ENCODE measurements at regions of chr1 and their contacts with region 1.

Region 1: DNA sequence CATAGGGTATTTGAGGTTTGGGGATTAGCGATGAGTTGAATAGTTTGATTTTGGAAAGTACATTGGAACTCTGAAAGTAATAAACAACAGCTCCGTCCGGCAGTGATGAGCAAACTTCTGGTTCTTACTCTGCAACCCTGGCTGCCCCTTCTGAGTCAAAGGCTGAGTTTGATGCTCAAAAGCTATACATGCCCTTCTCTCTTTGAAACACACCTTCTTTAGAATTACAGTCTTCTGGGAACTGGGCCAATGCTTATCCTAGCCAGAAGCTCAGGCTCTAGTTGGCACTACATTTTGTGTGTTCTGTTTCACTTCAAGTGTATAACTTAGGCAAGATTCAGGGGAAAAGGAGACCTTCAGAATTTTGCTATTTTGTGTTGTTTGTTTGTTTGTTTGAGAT is 9.3 kb downstream of the AHCYL1 start:
- DNase-seq: peak; percentile 69
- H3K4me3 Mint-ChIP-seq: no peak overlapping the region
- H3K27ac Mint-ChIP-seq: no peak overlapping the region
- H3K4me1 Mint-ChIP-seq: peaks cover 43% of the 10 kb centered on the region
- H3K27me3 Mint-ChIP-seq: no peaks in the 10 kb centered on the region
- CTCF ChIP-seq: no peak

Region 2: DNA sequence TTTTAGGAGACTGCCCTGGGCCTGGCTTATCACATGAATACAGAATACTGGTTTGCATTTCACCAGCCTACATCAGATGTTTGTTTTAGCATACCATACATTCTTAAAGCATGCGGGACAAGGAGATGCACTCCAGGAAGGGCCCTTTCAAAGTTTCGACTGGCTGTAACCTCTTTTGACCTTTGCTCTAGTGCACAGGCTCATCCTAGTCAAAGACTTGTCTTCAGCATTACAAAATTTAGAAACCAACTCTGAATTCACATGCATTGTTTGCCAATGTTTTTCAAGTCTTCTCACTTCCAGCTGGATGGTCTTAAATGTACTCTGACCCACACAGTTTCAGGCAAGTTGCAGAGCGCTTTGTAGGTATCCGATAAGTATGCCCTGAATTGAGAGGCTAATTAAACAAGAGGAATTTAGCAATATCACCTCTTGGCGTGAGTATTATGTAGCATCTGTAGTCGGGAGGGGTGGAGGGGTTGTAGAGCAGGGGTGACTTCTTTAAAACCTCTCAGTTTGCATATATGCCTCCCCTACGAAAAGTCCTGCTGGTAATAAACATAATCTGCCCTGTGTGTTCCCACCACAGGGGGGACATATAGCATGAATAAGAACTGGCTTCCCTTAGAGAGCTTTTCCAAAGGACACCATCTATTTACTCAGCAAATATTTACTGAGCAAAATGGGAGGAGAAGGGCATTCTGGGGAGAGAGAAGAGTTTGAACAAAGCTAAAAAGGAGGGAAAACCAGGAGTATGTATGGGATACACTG is 33.7 kb before region 1 on chr1:
- CTCF ChIA-PET with region 1: no interaction called
- POLR2A ChIA-PET with region 1: no interaction called
- intact Hi-C with region 1: no loop called
- DNase-seq: peak; percentile 58
- H3K4me3 Mint-ChIP-seq: no peak overlapping the region
- H3K27ac Mint-ChIP-seq: peak overlapping the region; percentile 82
- H3K4me1 Mint-ChIP-seq: peaks cover 29% of the 10 kb centered on the region
- H3K27me3 Mint-ChIP-seq: no peaks in the 10 kb centered on the region
- CTCF ChIP-seq: no peak

Region 3: GRCh38 chr1:110003747-110004630 is 10.1 kb after region 1 on chr1:
- CTCF ChIA-PET with region 1: interaction called, 93 read pairs
- POLR2A ChIA-PET with region 1: interaction called, 16 read pairs
- intact Hi-C with region 1: no loop called
- DNase-seq: peak; percentile 99
- H3K4me3 Mint-ChIP-seq: peak overlapping the region; percentile 70
- H3K27ac Mint-ChIP-seq: peak overlapping the region; percentile 88
- H3K4me1 Mint-ChIP-seq: peaks cover 53% of the 10 kb centered on the region
- H3K27me3 Mint-ChIP-seq: no peaks in the 10 kb centered on the region
- CTCF ChIP-seq: no peak

Region 4: GRCh38 chr1:110011527-110012041 is 17.7 kb after region 1 on chr1:
- CTCF ChIA-PET with region 1: interaction called, 93 read pairs
- POLR2A ChIA-PET with region 1: interaction called, 8 read pairs
- intact Hi-C with region 1: no loop called
- DNase-seq: peak; percentile 73
- H3K4me3 Mint-ChIP-seq: no peak overlapping the region
- H3K27ac Mint-ChIP-seq: peak overlapping the region; percentile 39
- H3K4me1 Mint-ChIP-seq: peaks cover 13% of the 10 kb centered on the region
- H3K27me3 Mint-ChIP-seq: no peaks in the 10 kb centered on the region
- CTCF ChIP-seq: peak; percentile 46